Activated naive CD4-positive, alpha-beta T cell treated with anti-CD3 and anti-CD28 coated beads, Interleukin-2, amount 10 ng/mL, durations not matched to agents 7 days and 5 days (primary cell): ENCODE measurements at regions of chr7 and their contacts with region 1.

Region 1: DNA sequence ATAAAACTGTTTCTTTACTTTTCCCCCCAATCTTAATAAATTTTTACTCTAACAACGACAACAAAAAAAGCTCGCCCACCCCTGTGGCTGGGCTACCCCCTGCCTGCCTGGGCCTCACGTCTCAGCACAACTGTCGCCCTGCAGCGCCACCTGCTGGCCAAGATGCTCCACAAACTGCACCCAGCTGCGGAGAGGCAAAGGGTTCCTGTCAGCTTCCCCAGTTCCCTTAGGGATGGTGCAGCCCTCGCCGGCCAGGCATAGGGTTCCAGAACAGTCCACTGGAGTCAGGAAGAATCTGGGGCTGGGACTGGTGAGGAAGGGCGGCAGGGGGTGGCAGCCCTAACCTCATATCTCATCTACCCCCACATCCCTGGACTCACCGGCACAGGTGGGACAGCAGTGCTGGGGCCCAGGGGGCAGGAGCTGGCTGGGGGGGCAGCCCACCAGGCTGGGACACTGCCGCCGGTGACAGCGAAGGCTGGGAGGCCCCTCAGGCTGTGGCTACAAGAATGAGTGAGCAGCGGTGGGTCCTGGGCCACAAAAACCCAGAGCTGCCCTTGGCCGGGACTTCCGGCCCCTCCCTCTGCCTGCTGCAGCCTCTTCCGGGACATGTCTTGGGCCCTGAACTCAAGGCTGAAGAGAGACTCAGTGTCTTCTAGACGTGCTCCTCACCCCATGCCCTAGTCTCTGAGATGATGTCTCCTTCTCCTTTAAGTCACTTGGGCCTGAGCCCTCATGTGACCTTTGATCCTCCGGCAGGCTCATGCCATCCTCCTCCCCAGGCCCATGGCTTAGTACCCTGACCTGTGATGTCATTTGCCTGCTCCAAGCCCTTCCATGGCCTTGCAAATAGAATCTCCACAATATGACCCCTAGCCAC is 21.2 kb downstream of the ATP6V1F start:
- DNase-seq: peak; percentile 88
- H3K4me3 Mint-ChIP-seq: no peak overlapping the region
- H3K27ac Mint-ChIP-seq: no peak overlapping the region
- H3K4me1 Mint-ChIP-seq: no peaks in the 10 kb centered on the region
- H3K27me3 Mint-ChIP-seq: peaks cover 12% of the 10 kb centered on the region

Region 2: GRCh38 chr7:128841921-128842651 is 41.8 kb before region 1 on chr7:
- CTCF ChIA-PET with region 1: interaction called, 36 read pairs
- DNase-seq: peak; percentile 69
- H3K4me3 Mint-ChIP-seq: no peak overlapping the region
- H3K27ac Mint-ChIP-seq: no peak overlapping the region
- H3K4me1 Mint-ChIP-seq: no peaks in the 10 kb centered on the region
- H3K27me3 Mint-ChIP-seq: no peaks in the 10 kb centered on the region

Region 3: DNA sequence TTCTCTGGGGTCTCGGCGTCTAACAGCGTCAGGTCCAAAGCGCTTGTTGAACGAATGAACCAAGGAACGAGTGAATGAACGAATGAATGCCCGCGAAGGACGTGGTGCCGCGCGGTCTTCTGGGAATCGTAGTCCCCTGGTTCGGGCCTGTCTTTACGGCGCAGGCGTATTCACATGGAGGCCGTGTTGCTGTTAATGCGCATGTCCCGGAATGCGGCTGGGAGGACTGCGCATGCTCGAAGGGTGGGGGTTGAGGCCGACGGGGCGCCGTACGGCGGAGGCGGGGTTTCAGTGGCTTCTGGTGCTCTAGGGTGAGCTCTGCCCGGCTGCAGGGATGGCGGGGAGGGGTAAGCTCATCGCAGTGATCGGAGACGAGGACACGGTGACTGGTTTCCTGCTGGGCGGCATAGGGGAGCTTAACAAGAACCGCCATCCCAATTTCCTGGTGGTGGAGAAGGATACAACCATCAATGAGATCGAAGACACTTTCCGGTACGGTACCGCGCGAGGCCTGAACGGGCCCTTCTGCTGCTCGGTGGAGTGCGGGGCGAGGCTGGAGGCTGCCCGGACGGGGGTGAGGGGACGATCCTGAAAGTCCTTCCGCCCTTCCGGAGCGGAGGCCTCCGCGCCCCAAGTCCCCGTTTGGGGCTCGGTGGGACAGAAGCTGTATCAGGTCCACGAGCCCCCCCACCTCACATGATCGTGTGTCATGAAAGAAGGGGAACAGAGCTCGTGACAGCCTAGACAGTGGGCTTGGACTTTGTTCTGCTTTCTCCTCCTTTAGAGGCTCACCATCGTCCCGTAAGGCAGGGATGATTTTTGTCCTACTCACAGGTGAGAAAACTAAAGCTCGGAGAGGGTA is 21.1 kb before region 1 on chr7 and contains the start of gene ATP6V1F:
- CTCF ChIA-PET with region 1: interaction called, 67 read pairs
- DNase-seq: peak; percentile 99
- H3K4me3 Mint-ChIP-seq: peak within 1 kb of the TSS; percentile 84
- H3K27ac Mint-ChIP-seq: peak within 1 kb of the TSS; percentile 84
- H3K4me1 Mint-ChIP-seq: peaks cover 28% of the 10 kb centered on the region
- H3K27me3 Mint-ChIP-seq: peaks cover 2% of the 10 kb centered on the region

Region 4: DNA sequence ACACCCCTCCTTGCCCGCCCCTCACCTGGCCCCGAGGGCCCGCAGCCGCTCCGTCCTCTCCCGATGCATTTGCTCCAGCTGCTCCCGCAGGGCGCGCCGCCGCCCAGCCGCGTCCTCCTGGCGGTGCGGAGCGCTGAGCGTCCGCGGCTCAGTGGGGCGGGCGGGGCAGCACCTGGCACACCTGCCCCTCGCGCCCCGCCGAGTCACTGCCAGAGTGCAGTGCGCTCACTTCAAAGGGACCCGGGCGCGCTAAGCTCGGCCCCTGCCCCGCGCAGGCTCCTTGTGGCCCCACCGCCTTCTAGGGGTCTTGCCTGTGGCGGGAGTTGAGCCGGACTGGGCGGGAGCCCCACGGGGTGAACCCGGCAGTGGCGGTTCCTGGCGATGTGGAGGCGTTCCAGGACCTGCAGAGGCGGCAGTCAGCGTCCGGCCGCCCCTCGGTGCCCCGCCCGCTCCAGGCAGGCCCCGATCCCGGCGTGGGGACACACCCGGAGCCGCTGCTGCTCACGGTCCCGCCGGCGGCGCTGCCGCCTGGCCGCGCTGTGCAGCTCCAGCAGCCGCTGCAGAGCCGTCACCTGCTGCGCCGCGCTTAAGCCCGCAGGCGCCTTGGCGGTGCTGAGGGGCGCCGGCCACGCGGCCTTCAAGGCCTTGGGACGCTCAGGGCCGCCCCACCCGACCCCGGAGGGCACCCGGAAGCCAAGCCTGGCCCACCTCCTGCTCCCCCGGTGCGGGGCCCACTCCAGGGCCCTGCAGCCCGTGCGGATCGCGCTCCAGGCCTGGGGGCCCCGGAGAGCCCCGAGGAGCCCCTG is 14.5 kb before region 1 on chr7:
- CTCF ChIA-PET with region 1: interaction called, 67 read pairs
- DNase-seq: peak; percentile 64
- H3K4me3 Mint-ChIP-seq: peak overlapping the region; percentile 52
- H3K27ac Mint-ChIP-seq: no peak overlapping the region
- H3K4me1 Mint-ChIP-seq: peaks cover 25% of the 10 kb centered on the region
- H3K27me3 Mint-ChIP-seq: peaks cover 53% of the 10 kb centered on the region